Prostate gland (tissue), 2 donors: ENCODE measurements at regions of chr19 and their contacts with region 1.

Region 1: DNA sequence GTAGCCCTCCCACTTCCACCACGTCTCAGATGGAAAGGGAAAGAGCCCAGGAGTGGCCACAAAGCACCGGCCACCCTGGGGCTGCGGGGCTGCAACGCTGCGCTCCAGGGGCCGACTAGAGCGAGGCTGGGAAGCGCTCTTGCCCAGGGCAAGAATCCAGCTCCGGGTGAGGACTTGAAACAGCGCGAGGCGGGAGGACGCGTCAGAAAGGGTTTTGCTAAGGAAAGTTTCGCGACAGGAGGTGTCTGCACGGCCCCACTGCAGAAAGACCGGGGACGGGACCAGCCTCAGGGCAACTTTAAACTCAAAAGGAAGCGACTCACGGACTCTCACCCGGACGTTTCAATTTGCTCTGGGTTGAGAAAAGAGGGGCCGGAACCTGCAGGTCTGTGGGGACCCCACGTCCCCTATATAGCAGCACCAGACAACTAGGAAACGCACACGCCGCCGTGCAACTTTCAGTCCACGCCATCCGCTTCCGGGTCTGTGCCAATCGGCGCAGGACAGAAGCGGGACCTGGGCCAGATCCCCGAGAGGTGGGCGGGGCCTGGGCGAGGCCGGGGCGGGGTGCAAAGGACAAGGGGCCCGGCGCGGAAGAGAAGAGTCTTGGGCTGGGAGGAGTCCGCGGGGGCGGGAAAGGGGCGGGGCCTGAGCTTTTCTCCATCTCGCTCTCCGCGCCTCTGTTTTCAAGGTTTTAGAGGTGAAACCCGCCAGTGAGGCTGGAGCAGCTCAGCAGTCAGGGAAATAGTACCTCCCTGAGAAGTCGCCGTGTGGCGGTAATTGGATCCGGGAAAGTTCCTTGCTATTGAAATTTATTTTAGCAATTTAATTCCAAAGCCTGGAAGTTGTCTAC is at the start of gene ZNF816:
- DNase-seq: peak; percentile 99
- H3K4me3 ChIP-seq: peak within 1 kb of the TSS; percentile 46 to 59
- H3K27ac ChIP-seq: peak within 1 kb of the TSS; percentile 72 to 74
- H3K4me1 ChIP-seq: no peaks in the 10 kb centered on the region
- H3K27me3 ChIP-seq: no peaks in the 10 kb centered on the region
- CTCF ChIP-seq: no peak
- POLR2A ChIP-seq: peak; percentile 64
- total RNA-seq, gene ZNF816: 15.8 to 31.8 TPM

Region 2: GRCh38 chr19:52922841-52923777 is 39.5 kb before region 1 on chr19 and contains the start of gene ZNF888:
- intact Hi-C with region 1: loop called (anchors 2 kb)
- DNase-seq: peak; percentile 92
- H3K4me3 ChIP-seq: peak within 1 kb of the TSS; percentile 42 to 56
- H3K27ac ChIP-seq: peak within 1 kb of the TSS; percentile 80 to 92
- H3K4me1 ChIP-seq: peaks cover 5% of the 10 kb centered on the region
- H3K27me3 ChIP-seq: no peaks in the 10 kb centered on the region
- CTCF ChIP-seq: peak in 1 of 4 experiments; percentile 8
- POLR2A ChIP-seq: peak; percentile 81
- total RNA-seq, gene ZNF888: 21.4 to 34.5 TPM